Vagina (tissue), 2 donors: ENCODE measurements at regions of chr11 and their contacts with region 1.

Region 1: DNA sequence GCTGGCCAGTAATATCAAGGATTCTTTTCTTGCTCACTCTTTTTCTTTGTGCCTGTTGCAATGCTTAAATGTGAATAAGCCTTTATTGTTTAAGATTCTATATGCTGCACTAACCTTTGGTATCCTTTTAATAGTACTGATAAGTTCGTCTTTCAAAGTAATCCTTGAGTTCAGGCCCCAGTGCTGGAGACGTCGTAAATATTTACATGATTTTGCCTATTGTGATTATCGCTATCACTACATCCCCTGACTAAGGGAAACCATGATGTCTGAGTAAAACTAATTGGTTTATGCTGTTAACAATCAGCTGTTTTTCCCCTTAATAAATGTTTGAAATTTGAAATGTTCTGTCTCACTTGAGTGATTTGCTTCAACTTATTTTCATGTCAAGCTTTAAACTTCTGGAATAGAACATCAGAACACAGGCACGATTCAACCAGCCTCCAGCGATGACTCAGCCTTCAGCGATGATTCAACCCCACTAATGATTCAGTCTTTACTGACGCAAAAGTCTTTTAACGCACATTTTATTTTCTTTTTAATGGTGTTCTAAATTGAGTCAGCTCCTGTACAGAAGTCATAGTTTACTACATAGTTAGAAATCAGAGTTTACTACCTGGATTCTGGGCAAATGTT is 3.9 kb downstream of the HTATIP2 start:
- DNase-seq: no peak
- H3K4me3 ChIP-seq: peak overlapping the region in 1 of 2 donors; percentile 21
- H3K27ac ChIP-seq: peak overlapping the region; percentile 79
- H3K4me1 ChIP-seq: peaks cover 39% of the 10 kb centered on the region
- H3K27me3 ChIP-seq: no peaks in the 10 kb centered on the region
- CTCF ChIP-seq: no peak
- POLR2A ChIP-seq: no peak

Region 2: DNA sequence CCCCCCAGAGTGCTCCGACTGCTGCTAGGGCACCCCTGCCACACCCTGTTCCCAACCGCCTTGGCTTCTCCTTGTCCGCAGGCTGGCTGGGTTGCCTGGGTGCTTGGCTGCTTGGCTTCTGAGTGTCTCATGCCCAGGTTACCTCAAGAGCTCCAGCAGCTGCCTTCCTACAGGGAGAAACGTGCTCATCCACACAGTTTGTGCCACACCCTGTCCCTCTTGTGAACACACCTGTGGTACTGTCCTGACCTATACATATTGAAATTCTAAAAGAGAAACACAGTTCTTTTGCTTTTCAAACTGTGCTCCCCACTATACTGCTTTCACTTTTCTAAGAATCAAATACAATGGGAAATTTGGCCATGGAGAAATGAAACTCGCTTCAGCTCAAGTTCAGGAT is 398.6 kb before region 1 on chr11:
- intact Hi-C with region 1: loop called (anchors 5 kb)
- DNase-seq: no peak
- H3K4me3 ChIP-seq: no peak overlapping the region
- H3K27ac ChIP-seq: no peak overlapping the region
- H3K4me1 ChIP-seq: peaks cover 5% of the 10 kb centered on the region
- H3K27me3 ChIP-seq: no peaks in the 10 kb centered on the region
- CTCF ChIP-seq: no peak
- POLR2A ChIP-seq: no peak